Ascending aorta (tissue), 2 donors: ENCODE measurements at regions of chr1 and their contacts with region 1.

Region 1: GRCh38 chr1:46616277-46617107 is at the start of gene MOB3C:
- DNase-seq: peak; percentile 80 to 96
- H3K4me3 ChIP-seq: peak within 1 kb of the TSS; percentile 75 to 94
- H3K27ac ChIP-seq: peak within 1 kb of the TSS; percentile 89 to 90
- H3K4me1 ChIP-seq: peaks cover 32 to 44% of the 10 kb centered on the region in 2 donors
- H3K27me3 ChIP-seq: no peaks in the 10 kb centered on the region
- CTCF ChIP-seq: no peak
- total RNA-seq, gene MOB3C: 16.1 TPM

Region 2: GRCh38 chr1:46603858-46604549 is 12.5 kb before region 1 on chr1 and contains the start of gene MKNK1:
- intact Hi-C with region 1: loop called (anchors 1 kb)
- DNase-seq: peak; percentile 87 to 98
- H3K4me3 ChIP-seq: peak within 1 kb of the TSS; percentile 89 to 90
- H3K27ac ChIP-seq: peak within 1 kb of the TSS; percentile 82 to 83
- H3K4me1 ChIP-seq: peaks cover 10 to 38% of the 10 kb centered on the region in 2 donors
- H3K27me3 ChIP-seq: no peaks in the 10 kb centered on the region
- CTCF ChIP-seq: peak in 2 of 3 experiments; percentile 14 to 17
- total RNA-seq, gene MKNK1: 47.8 TPM

Region 3: GRCh38 chr1:46637444-46638083 is 21.1 kb after region 1 on chr1:
- intact Hi-C with region 1: loop called (anchors 1 kb)
- DNase-seq: no peak
- H3K4me3 ChIP-seq: no peak overlapping the region
- H3K27ac ChIP-seq: peak overlapping the region; percentile 73 to 92
- H3K4me1 ChIP-seq: peaks cover 0 to 10% of the 10 kb centered on the region in 2 donors
- H3K27me3 ChIP-seq: no peaks in the 10 kb centered on the region
- CTCF ChIP-seq: no peak

Region 4: DNA sequence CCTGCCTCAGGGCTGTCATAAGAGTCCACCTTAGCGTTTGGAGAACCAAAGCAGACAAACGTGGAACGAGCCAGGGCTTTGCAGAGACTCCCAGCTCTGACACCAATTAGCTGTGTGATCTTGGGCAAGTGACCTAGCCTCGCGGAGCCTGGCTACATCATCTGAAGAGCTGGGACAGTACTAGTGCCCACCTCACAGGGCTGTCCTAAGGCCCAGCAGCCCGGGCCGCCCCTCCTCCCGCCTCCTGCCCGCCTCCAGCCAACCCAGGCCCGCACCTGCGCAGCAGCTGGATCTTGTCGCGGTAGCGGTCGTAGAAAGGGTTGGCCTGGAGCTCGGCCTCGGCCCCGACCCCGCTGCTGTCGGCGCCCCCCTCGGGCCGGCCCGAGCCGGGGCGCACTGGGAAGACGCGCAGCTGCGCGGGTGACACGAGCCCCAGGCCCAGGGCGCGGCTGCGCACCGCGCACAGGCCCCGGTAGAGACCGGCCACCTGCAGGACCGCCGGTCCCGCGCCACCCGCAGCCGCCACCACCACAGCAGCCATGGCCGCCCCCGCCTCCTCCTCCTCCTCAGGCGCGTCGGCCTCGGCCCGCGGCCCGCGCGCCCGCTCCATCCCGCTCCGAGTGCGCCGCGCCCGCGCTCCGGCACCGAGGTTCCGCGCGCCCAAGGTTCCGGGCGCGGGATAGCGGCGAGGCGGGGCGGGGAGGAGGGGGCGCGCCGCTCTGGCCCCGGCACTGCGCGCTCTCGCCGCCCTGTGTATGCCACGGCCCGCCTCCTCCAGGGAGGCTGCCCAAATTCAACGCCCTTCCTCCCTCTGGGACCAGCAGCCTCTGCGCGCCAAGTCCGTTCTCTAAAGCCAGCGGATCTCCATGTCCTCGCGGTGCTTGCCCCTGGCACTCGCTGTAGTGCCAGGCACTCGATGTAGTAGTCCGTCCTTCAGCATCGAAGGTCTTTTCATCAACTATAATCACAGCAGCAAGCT is 51.6 kb after region 1 on chr1 and contains the start of gene ATPAF1:
- intact Hi-C with region 1: loop called (anchors 1 kb)
- DNase-seq: peak; percentile 31 to 90
- H3K4me3 ChIP-seq: peak within 1 kb of the TSS; percentile 96 to 97
- H3K27ac ChIP-seq: peak within 1 kb of the TSS; percentile 80 to 89
- H3K4me1 ChIP-seq: peaks cover 11 to 19% of the 10 kb centered on the region in 2 donors
- H3K27me3 ChIP-seq: no peaks in the 10 kb centered on the region
- CTCF ChIP-seq: no peak
- total RNA-seq, gene ATPAF1: 23.6 TPM

Region 5: GRCh38 chr1:46718727-46719622 is 102.5 kb after region 1 on chr1 and contains the start of gene EFCAB14:
- intact Hi-C with region 1: loop called (anchors 2 kb)
- DNase-seq: peak; percentile 83 to 97
- H3K4me3 ChIP-seq: peak within 1 kb of the TSS; percentile 97 to 99
- H3K27ac ChIP-seq: peak within 1 kb of the TSS; percentile 78 to 93
- H3K4me1 ChIP-seq: peaks cover 12 to 22% of the 10 kb centered on the region in 2 donors
- H3K27me3 ChIP-seq: no peaks in the 10 kb centered on the region
- CTCF ChIP-seq: no peak
- total RNA-seq, gene EFCAB14: 99.8 TPM

Region 6: GRCh38 chr1:47333922-47334764 is 717.7 kb after region 1 on chr1:
- intact Hi-C with region 1: loop called (anchors 10 kb)
- DNase-seq: peak; percentile 31 to 90
- H3K4me3 ChIP-seq: peak overlapping the region; percentile 93 to 100
- H3K27ac ChIP-seq: peak overlapping the region; percentile 99 to 100
- H3K4me1 ChIP-seq: peaks cover 14 to 22% of the 10 kb centered on the region in 2 donors
- H3K27me3 ChIP-seq: no peaks in the 10 kb centered on the region
- CTCF ChIP-seq: peak in 1 of 3 experiments; percentile 28